CD4-positive, alpha-beta memory T cell (primary cell): ENCODE measurements at regions of chr1 and their contacts with region 1.

Region 1: DNA sequence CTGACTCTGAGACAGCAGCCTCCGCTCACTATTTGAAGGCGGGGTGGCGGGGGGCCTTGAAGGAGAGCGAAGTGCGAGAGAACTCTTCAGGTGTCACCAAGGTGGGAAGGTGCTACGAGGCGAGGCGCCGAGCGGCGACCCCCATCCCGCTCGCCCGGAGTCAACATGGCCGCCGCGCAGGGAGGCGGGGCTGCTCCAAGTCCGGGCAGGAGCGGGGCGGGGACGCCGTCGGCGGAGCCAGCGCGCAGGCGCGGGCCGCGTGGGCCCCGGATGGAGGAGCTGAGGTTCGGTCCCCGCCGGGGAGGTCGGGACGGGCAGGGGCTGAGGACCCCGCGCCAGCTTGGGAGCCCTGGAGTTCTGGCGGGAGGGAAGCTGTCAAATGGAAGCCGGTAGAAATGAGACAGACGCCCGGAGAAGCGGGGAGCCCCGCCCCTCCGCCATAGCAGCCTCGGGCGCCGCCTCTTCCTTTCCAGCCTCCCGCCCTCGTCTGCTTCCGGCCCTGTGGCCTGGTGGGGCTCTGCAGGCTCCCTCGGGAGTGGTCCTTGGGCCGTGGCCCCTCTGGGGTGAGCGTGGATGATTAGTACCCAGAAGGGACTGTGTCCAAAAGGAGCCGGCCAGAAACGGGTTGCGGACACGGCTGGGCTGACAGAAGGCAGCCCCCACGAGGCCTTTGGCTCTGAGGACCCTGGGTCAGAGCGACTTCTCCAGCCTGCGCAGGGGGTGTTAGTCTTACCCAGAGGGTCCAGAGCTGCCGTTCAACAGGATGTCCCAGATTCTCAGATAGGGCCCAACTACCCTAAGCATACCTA is at the start of gene PIGV:
- DNase-seq: peak; percentile 87 to 92 (median 89)
- H3K4me3 ChIP-seq: peak within 1 kb of the TSS; percentile 87 to 88
- H3K4me3 Mint-ChIP-seq: peak within 1 kb of the TSS; percentile 98 to 100 (median 99)
- H3K27ac ChIP-seq: peak within 1 kb of the TSS; percentile 90
- H3K27ac Mint-ChIP-seq: peak within 1 kb of the TSS; percentile 99 to 100 (median 100)
- H3K4me1 ChIP-seq: peaks cover 79% of the 10 kb centered on the region
- H3K4me1 Mint-ChIP-seq: peaks cover 58 to 83% (median 72%) of the 10 kb centered on the region in 4 donors
- H3K27me3 ChIP-seq: no peaks in the 10 kb centered on the region
- H3K27me3 Mint-ChIP-seq: no peaks in the 10 kb centered on the region
- total RNA-seq, gene PIGV: 17.7 to 18.2 TPM

Region 2: GRCh38 chr1:26500488-26501175 is 287.3 kb before region 1 on chr1:
- CTCF ChIA-PET with region 1: interaction called, 23 read pairs
- POLR2A ChIA-PET with region 1: interaction called, 30 read pairs
- intact Hi-C with region 1: loop called (anchors 1 kb)
- DNase-seq: peak; percentile 85 to 87 (median 86)
- H3K4me3 ChIP-seq: peak overlapping the region; percentile 58 to 95
- H3K4me3 Mint-ChIP-seq: peak overlapping the region; percentile 83 to 90 (median 87)
- H3K27ac ChIP-seq: peak overlapping the region; percentile 87
- H3K27ac Mint-ChIP-seq: peak overlapping the region; percentile 85 to 95 (median 94)
- H3K4me1 ChIP-seq: peaks cover 16% of the 10 kb centered on the region
- H3K4me1 Mint-ChIP-seq: peaks cover 2 to 32% (median 12%) of the 10 kb centered on the region in 4 donors
- H3K27me3 ChIP-seq: no peaks in the 10 kb centered on the region
- H3K27me3 Mint-ChIP-seq: no peaks in the 10 kb centered on the region

Region 3: GRCh38 chr1:26677306-26678115 is 110.4 kb before region 1 on chr1:
- CTCF ChIA-PET with region 1: interaction called, 67 read pairs
- POLR2A ChIA-PET with region 1: interaction called, 36 read pairs
- intact Hi-C with region 1: loop called (anchors 1 kb)
- DNase-seq: peak; percentile 48 to 68 (median 54)
- H3K4me3 ChIP-seq: no peak overlapping the region
- H3K4me3 Mint-ChIP-seq: peak overlapping the region in 7 of 8 donors; percentile 36 to 82 (median 77)
- H3K27ac ChIP-seq: peak overlapping the region; percentile 5
- H3K27ac Mint-ChIP-seq: peak overlapping the region; percentile 24 to 89 (median 74)
- H3K4me1 ChIP-seq: peaks cover 20% of the 10 kb centered on the region
- H3K4me1 Mint-ChIP-seq: peaks cover 11 to 23% (median 14%) of the 10 kb centered on the region in 4 donors
- H3K27me3 ChIP-seq: no peaks in the 10 kb centered on the region
- H3K27me3 Mint-ChIP-seq: no peaks in the 10 kb centered on the region

Region 4: GRCh38 chr1:26723013-26723991 is 64.6 kb before region 1 on chr1:
- CTCF ChIA-PET with region 1: interaction called, 20 read pairs
- POLR2A ChIA-PET with region 1: interaction called, 23 read pairs
- intact Hi-C with region 1: loop called (anchors 2 kb)
- DNase-seq: peak; percentile 25 to 81 (median 31)
- H3K4me3 ChIP-seq: peak overlapping the region in 1 of 2 donors; percentile 44
- H3K4me3 Mint-ChIP-seq: peak overlapping the region; percentile 44 to 87 (median 74)
- H3K27ac ChIP-seq: peak overlapping the region; percentile 23
- H3K27ac Mint-ChIP-seq: peak overlapping the region; percentile 62 to 92 (median 78)
- H3K4me1 ChIP-seq: peaks cover 96% of the 10 kb centered on the region
- H3K4me1 Mint-ChIP-seq: peaks cover 77 to 94% (median 84%) of the 10 kb centered on the region in 4 donors
- H3K27me3 ChIP-seq: no peaks in the 10 kb centered on the region
- H3K27me3 Mint-ChIP-seq: no peaks in the 10 kb centered on the region

Region 5: DNA sequence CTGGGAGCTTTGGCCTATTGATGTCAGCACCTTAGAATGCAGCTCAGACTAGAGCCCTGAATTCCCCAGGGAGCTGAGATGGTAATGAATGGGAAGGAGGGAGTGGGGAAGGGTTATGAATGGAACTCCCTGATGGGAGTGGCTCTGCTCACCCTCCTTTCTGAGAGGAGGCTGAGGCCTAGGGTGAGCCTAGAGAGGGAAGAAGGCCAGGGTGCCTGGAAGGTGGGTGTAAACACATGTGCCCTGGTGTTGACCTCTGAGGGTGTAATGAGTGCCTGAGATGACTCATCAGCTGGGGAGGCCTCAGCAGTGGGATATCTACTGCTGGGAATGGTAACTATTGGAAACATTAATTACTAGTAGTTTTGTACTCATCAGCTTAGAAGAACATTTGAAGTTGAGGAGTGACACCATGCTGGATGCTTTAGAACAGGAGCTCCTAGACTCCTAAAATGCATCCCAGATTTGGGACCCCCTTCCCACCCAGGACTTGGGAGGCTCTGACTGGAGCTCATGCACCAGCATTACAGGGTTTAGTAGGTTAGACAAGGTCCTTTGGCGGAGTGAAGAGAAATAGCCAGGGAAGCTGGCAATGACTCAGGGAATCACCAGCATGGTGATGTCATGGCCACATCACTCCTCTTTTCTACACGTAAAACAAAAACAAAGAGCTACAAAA is 16.1 kb before region 1 on chr1:
- CTCF ChIA-PET with region 1: interaction called, 13 read pairs
- POLR2A ChIA-PET with region 1: interaction called, 36 read pairs
- intact Hi-C with region 1: loop called (anchors 2 kb)
- DNase-seq: no peak
- H3K4me3 ChIP-seq: no peak overlapping the region
- H3K4me3 Mint-ChIP-seq: no peak overlapping the region
- H3K27ac ChIP-seq: peak overlapping the region; percentile 10
- H3K27ac Mint-ChIP-seq: peak overlapping the region; percentile 52 to 86 (median 61)
- H3K4me1 ChIP-seq: peaks cover 3% of the 10 kb centered on the region
- H3K4me1 Mint-ChIP-seq: peaks cover 0 to 7% (median 3%) of the 10 kb centered on the region in 4 donors
- H3K27me3 ChIP-seq: no peaks in the 10 kb centered on the region
- H3K27me3 Mint-ChIP-seq: no peaks in the 10 kb centered on the region

Region 6: GRCh38 chr1:26833432-26834405 is 45.8 kb after region 1 on chr1:
- CTCF ChIA-PET with region 1: interaction called, 25 read pairs
- POLR2A ChIA-PET with region 1: interaction called, 13 read pairs
- intact Hi-C with region 1: loop called (anchors 2 kb)
- DNase-seq: peak; percentile 89 to 98 (median 94)
- H3K4me3 ChIP-seq: peak overlapping the region in 1 of 2 donors; percentile 23
- H3K4me3 Mint-ChIP-seq: peak overlapping the region; percentile 74 to 92 (median 85)
- H3K27ac ChIP-seq: peak overlapping the region; percentile 97
- H3K27ac Mint-ChIP-seq: peak overlapping the region; percentile 98 to 100 (median 100)
- H3K4me1 ChIP-seq: peaks cover 74% of the 10 kb centered on the region
- H3K4me1 Mint-ChIP-seq: peaks cover 60 to 87% (median 73%) of the 10 kb centered on the region in 4 donors
- H3K27me3 ChIP-seq: no peaks in the 10 kb centered on the region
- H3K27me3 Mint-ChIP-seq: no peaks in the 10 kb centered on the region

Region 7: DNA sequence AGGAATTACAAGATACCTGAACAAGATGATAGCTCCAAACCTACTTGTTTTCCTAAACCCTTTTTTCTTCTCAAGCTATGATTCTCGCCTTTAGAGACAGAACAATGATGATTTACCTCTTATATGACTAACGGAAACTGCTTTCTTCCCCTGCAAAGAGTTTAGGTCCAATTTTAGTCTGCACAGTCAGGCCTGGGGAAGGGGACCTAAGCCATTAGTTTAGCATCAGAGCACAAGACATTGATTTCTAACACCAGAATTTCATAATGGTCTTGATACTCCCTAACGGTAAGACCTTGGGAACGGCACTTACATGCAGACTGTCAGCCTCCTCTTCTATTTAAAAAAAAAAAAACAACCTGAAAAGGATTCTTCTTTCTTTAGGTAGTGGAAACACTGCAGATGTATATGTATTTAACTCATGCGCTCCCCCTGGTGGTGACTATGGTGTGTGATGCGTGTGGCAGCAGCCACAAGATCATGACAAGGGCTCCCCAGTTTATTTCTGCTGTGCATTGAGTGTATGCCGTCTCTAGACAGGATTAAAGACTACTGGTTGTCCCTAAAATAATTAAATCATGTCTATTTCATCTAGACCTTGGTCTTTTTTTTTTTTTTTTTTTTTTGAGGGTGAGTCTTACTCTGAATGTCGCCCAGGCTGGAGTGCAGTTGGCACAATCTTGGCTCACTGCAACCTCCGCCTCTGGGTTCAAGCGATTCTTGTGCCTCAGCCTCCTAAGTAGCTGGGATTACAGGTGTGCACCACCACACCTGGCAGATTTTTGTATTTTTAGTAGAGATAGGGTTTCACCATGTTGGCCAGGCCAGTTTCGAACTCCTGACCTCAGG is 496.7 kb after region 1 on chr1:
- CTCF ChIA-PET with region 1: no interaction called
- POLR2A ChIA-PET with region 1: no interaction called
- intact Hi-C with region 1: no loop called
- DNase-seq: peak; percentile 77 to 85 (median 81)
- H3K4me3 ChIP-seq: no peak overlapping the region
- H3K4me3 Mint-ChIP-seq: no peak overlapping the region
- H3K27ac ChIP-seq: no peak overlapping the region
- H3K27ac Mint-ChIP-seq: peak overlapping the region in 4 of 7 donors; percentile 42 to 73 (median 62)
- H3K4me1 ChIP-seq: no peaks in the 10 kb centered on the region
- H3K4me1 Mint-ChIP-seq: peaks cover 0 to 6% (median under 1%) of the 10 kb centered on the region in 4 donors
- H3K27me3 ChIP-seq: no peaks in the 10 kb centered on the region
- H3K27me3 Mint-ChIP-seq: no peaks in the 10 kb centered on the region